CD8-positive, alpha-beta T cell (primary cell): ENCODE measurements at regions of chr18 and their contacts with region 1.

Region 1: DNA sequence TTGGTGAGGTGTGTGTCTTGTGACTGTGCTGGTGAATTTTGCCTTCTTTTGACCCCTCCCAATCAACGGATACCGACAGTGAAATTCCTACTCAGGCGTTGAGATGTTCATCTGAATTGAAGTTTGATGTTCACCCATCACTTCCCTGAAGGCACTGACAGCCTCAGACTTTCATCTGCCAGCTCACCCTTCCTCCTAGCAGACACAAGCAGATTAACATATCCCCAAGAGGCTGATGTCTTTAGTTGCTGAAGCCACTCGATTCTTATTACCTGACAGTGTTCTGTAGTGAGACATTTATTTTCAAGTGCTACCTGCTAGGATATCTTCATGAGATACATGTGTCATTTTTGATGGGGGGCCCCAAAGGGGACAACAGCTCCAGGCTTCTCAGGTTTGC is 1330.1 kb upstream of the PIK3C3 start:
- DNase-seq: no peak
- ATAC-seq: no peak
- H3K4me3 ChIP-seq: no peak overlapping the region
- H3K4me3 Mint-ChIP-seq: no peak overlapping the region
- H3K27ac ChIP-seq: no peak overlapping the region
- H3K27ac Mint-ChIP-seq: no peak overlapping the region
- H3K4me1 ChIP-seq: no peaks in the 10 kb centered on the region
- H3K4me1 Mint-ChIP-seq: no peaks in the 10 kb centered on the region
- H3K27me3 ChIP-seq: no peaks in the 10 kb centered on the region
- H3K27me3 Mint-ChIP-seq: no peaks in the 10 kb centered on the region
- CTCF ChIP-seq: no peak

Region 2: DNA sequence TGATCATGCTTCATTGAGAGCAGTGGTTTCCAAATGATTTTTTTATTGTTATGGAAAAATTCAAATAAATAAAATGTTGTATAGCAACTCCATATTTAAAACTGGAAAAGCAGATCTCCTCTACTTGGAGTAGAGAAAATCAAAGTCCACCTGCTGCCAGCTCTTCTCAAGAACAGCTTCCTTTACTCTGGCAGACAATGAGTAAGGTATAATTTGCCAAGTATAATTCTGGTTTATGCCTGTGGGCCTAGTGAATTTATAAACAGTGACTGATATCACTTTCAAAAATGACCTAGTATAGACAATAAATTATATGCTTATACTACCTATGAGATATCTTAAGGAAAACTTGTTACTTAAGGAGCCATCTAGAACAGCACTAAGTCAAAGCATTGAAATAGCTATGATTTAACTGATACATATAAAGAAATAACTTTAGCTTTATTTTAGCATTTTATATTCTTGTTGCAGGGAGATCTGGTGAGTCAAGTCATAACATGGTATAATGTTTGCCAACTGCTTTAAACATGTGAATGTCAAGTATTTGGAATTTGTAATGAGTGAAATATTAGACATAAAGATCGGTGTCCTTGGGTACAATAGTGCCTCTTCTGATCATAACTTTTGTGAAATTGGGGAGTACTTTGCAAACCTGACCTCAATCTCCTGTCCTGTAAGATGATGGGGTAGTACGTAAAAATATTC is 59.0 kb before region 1 on chr18:
- CTCF ChIA-PET with region 1: no interaction called
- POLR2A ChIA-PET with region 1: no interaction called
- intact Hi-C with region 1: loop called in 1 of 2 experiments (anchors 10 kb)
- DNase-seq: no peak
- ATAC-seq: no peak
- H3K4me3 ChIP-seq: no peak overlapping the region
- H3K4me3 Mint-ChIP-seq: no peak overlapping the region
- H3K27ac ChIP-seq: no peak overlapping the region
- H3K27ac Mint-ChIP-seq: no peak overlapping the region
- H3K4me1 ChIP-seq: no peaks in the 10 kb centered on the region
- H3K4me1 Mint-ChIP-seq: no peaks in the 10 kb centered on the region
- H3K27me3 ChIP-seq: no peaks in the 10 kb centered on the region
- H3K27me3 Mint-ChIP-seq: no peaks in the 10 kb centered on the region
- CTCF ChIP-seq: no peak

Region 3: DNA sequence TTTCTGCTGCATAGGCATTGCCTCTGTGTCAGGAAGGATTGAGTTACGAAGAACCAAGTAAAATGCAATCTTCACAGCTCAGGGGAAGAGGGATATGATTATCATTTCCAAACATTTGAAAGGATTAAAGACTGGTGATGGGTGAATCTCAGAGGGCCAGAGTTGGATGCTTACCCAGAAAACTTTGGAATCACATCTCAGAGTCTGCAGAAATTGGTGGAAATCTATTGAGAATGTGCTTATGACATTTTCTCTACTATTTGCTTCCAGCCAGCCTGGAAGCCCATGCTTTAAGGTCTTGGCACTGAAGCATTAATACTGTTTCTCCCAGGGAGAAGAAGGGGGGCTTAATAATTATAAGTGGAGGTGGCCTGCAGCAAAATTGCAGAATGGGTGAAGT is 28.7 kb after region 1 on chr18:
- CTCF ChIA-PET with region 1: no interaction called
- POLR2A ChIA-PET with region 1: no interaction called
- intact Hi-C with region 1: no loop called
- DNase-seq: no peak
- ATAC-seq: no peak
- H3K4me3 ChIP-seq: no peak overlapping the region
- H3K4me3 Mint-ChIP-seq: no peak overlapping the region
- H3K27ac ChIP-seq: no peak overlapping the region
- H3K27ac Mint-ChIP-seq: no peak overlapping the region
- H3K4me1 ChIP-seq: no peaks in the 10 kb centered on the region
- H3K4me1 Mint-ChIP-seq: no peaks in the 10 kb centered on the region
- H3K27me3 ChIP-seq: no peaks in the 10 kb centered on the region
- H3K27me3 Mint-ChIP-seq: no peaks in the 10 kb centered on the region
- CTCF ChIP-seq: no peak

Region 4: DNA sequence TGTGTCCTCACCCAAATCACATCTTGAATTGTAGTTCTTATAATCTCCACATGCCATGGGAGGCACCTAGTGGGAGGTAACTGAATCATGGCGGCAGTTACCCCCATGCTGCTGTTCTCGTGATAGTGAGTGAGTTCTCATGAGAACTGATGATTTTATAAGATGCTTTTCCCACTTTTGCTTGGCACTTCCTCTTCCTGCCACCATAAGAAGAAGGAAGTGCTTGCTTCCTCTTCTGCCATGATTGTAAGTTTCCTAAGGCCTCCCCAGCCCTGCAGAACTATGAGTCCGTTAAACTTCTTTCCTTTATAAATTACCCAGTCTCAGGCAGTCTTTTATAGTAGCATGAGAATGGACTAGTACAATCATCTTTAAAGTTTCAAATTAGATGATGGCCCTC is 427.7 kb after region 1 on chr18:
- CTCF ChIA-PET with region 1: no interaction called
- POLR2A ChIA-PET with region 1: no interaction called
- intact Hi-C with region 1: no loop called
- DNase-seq: no peak
- ATAC-seq: no peak
- H3K4me3 ChIP-seq: no peak overlapping the region
- H3K4me3 Mint-ChIP-seq: no peak overlapping the region
- H3K27ac ChIP-seq: no peak overlapping the region
- H3K27ac Mint-ChIP-seq: no peak overlapping the region
- H3K4me1 ChIP-seq: no peaks in the 10 kb centered on the region
- H3K4me1 Mint-ChIP-seq: no peaks in the 10 kb centered on the region
- H3K27me3 ChIP-seq: no peaks in the 10 kb centered on the region
- H3K27me3 Mint-ChIP-seq: no peaks in the 10 kb centered on the region
- CTCF ChIP-seq: no peak